ENCODE measurements at regions of chr6 and their contacts with region 1.

Region 1: DNA sequence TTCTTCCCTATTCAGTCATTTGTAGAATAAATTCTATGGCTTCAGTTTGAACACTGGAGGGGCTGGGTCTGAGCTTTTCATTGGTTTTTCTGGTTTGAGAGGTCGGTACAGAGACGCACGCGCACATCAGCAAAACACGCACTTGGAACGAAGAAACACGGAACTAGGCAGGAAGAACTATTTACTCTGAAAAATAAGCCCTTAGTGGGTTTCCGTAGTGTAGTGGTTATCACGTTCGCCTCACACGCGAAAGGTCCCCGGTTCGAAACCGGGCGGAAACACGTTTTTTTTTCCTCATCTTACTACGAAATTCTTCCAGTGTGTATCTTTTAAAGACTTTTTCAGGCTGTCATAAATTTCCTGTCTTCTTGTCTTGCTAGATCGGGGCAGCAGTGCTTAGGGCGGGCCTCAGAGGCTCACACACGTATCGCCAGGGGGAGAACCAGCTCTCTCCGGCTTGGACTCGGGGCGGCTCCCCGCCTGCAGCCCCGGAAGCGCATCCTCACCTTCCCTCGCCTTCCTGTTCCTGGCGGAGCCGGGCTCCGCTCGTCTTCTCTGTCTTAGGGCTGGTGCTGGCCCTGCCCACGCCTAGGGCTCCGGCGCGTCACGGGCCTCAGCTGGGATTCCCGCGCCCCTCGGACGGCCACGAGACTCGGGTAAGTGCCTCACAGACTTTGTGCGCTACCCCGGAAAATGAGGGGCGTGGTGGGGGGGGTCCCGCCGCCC is at the start of gene HMGN4:
- DNase-seq: peak; percentile 80
- H3K4me3 Mint-ChIP-seq: peak within 1 kb of the TSS; percentile 91
- H3K27ac Mint-ChIP-seq: peak within 1 kb of the TSS; percentile 96
- H3K4me1 Mint-ChIP-seq: peaks cover 60% of the 10 kb centered on the region
- H3K27me3 Mint-ChIP-seq: peaks cover 3% of the 10 kb centered on the region
- total RNA-seq, gene HMGN4: 77.6 and 86.8 TPM in 2 replicates

Region 2: GRCh38 chr6:26025894-26026832 is 511.8 kb before region 1 on chr6:
- intact Hi-C with region 1: loop called (anchors 10 kb)
- DNase-seq: peak; percentile 88
- H3K4me3 Mint-ChIP-seq: peak overlapping the region; percentile 85
- H3K27ac Mint-ChIP-seq: peak overlapping the region; percentile 96
- H3K4me1 Mint-ChIP-seq: peaks cover 93% of the 10 kb centered on the region
- H3K27me3 Mint-ChIP-seq: no peaks in the 10 kb centered on the region

Region 3: DNA sequence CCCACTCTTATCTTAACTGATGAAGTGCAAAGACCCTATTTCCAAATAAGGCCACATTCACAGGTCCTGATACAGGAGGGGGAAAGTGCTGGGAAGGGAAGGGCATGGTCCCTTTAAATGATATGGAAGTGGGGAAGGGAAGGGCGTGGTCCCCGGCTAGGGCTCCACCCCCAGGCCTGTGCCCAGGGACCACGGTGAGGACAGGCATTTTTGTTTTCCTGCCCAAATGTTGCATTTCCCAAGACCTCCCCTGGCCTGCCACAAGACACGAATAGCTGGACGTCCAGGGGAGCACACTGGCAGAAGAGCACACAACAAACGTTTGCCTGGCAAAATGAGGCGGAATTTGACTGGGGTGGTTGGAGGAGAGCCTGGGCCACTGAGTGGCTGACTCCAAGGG is 466.9 kb before region 1 on chr6:
- intact Hi-C with region 1: no loop called
- DNase-seq: no peak
- H3K4me3 Mint-ChIP-seq: no peak overlapping the region
- H3K27ac Mint-ChIP-seq: no peak overlapping the region
- H3K4me1 Mint-ChIP-seq: peaks cover under 1% of the 10 kb centered on the region
- H3K27me3 Mint-ChIP-seq: peaks cover 14% of the 10 kb centered on the region

Region 4: DNA sequence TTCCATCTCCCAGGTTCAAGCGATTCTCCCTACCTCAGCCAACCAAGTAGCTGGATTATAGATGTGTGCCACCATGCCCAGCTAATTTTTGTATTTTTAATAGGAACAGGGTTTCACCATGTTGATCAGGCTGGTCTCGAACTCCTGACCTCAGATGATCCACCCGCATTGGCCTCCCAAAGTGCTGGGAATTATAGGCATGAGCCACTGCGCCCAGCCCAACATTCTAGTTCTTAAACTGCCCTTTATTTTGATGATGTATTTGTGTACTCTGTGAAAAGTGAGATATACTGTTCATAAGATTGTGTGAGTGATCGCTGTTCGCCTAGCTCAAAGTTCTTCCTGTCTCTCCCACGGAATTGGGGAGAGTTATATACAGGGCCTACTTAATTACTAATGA is 357.7 kb before region 1 on chr6:
- intact Hi-C with region 1: no loop called
- DNase-seq: no peak
- H3K4me3 Mint-ChIP-seq: no peak overlapping the region
- H3K27ac Mint-ChIP-seq: peak overlapping the region; percentile 80
- H3K4me1 Mint-ChIP-seq: peaks cover 46% of the 10 kb centered on the region
- H3K27me3 Mint-ChIP-seq: no peaks in the 10 kb centered on the region

Region 5: DNA sequence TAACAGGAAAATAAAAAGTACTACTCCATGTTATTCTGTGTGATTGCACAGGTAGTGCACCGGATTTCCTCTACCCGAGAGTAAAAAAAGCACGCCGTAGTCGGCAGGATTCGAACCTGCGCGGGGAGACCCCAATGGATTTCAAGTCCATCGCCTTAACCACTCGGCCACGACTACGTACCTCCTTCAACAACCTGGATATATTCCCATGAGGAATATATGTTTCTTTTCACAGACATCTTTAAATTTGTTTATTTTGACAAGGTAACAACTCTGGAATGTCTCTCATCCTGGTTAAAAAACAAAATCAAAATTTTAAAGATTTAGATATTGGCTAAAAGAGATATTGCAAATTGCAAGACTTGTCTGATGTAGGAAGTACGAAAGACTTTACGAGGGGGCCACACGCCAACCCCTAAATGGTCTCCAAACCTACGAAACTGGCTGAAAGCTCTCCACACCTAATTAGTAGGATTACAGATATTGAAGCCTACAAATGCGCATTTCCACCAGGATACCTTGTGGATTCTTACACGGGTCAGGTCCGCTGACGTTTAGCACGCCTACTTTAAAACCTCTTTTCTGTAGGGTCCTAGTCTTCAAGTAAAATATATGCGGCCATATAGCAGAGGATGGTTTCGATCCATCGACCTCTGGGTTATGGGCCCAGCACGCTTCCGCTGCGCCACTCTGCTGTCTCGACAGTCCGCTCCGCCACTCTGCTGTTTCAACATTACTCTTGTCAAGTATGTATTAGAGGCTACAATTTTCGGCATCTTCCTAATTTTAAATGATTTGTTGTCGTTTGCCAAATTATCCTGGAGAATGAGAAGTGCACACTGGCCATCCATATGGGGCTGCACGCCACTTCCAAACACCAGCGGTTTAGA is 225.3 kb before region 1 on chr6:
- intact Hi-C with region 1: loop called (anchors 1 kb)
- DNase-seq: peak; percentile 72
- H3K4me3 Mint-ChIP-seq: peak overlapping the region; percentile 84
- H3K27ac Mint-ChIP-seq: peak overlapping the region; percentile 92
- H3K4me1 Mint-ChIP-seq: peaks cover 51% of the 10 kb centered on the region
- H3K27me3 Mint-ChIP-seq: no peaks in the 10 kb centered on the region

Region 6: GRCh38 chr6:26342106-26343004 is 195.7 kb before region 1 on chr6:
- intact Hi-C with region 1: loop called (anchors 1 kb)
- DNase-seq: no peak
- H3K4me3 Mint-ChIP-seq: peak overlapping the region; percentile 84
- H3K27ac Mint-ChIP-seq: peak overlapping the region; percentile 53
- H3K4me1 Mint-ChIP-seq: peaks cover 27% of the 10 kb centered on the region
- H3K27me3 Mint-ChIP-seq: peaks cover 7% of the 10 kb centered on the region

Region 7: DNA sequence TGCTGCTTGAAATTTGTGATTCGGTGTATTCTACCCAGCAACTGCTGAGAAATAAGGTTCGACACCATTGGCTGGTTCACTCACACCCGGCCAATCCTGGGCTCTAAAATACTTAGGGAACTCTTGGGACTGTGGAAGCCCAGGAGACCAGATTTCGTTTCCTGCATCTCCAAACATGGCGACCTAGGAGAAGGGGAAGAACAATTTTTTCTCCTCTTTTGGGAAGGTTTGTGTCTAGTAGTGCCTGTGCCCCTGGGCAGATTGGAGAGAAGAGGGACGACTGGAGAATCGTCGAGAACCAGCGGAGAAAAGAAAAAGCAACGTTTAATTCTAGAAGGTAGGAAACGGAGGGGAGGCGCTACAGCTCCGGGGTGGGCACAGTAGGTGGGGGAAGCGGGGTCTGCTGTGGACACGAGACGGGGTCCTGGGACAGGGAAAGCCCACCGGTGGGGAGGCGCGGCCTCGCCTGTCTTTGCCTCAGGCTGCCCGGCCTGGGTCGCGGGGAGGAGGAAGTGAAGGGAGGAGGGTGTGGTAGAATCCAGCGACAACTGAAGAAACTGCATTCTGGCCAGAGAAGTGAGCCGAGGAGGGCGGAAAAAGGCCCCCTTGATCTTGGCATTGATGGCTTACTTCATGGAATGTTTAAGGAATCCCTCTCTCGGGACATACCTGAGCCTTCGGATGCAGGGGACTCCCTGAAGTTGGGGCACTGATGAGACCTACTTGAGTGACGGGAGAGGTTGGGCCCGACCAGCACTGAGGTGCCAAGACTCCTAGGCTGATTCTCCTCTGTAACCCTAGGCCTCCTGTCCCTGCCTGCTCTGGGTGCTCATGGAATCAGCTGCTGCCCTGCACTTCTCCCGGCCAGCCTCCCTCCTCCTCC is 80.0 kb before region 1 on chr6 and contains the start of gene BTN2A1:
- intact Hi-C with region 1: loop called (anchors 1 kb)
- DNase-seq: peak; percentile 68
- H3K4me3 Mint-ChIP-seq: peak within 1 kb of the TSS; percentile 100
- H3K27ac Mint-ChIP-seq: peak within 1 kb of the TSS; percentile 96
- H3K4me1 Mint-ChIP-seq: peaks cover 57% of the 10 kb centered on the region
- H3K27me3 Mint-ChIP-seq: no peaks in the 10 kb centered on the region
- total RNA-seq, gene BTN2A1: 19.9 TPM in 2 replicates

Region 8: DNA sequence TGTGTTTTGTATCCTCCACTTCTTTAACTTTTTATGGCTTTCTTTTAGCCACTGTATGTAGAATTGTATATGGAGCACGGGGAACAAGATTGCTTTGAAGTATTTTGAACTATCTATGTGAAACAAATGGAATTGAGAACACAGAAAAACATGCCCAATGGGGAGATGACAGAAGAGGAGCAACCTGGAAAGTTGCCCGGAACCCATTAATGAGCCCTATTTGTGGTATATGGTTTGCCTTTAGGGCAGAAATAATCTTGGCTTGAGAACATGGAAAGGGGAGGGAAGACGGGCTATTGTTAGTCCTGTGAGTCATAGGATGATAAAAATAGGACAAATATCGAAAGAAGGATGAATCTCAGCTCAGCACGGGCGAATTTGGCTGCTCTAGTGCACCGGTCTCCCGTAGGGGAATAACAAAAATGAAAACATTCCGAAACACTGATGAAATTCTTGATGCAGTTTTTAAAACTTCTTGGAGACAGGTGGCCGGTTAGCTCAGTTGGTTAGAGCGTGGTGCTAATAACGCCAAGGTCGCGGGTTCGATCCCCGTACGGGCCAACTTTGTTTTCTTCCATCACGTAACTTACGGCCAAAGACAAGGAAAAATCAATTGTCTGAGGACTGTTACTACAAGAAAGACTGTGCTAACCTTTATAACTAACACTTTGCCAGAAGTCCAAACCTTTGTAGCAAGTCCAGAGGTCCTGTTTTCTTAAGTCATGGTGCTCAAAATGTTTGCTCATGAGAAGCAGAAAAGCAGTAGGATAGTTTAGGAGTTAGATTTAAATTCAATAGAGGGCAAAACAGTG is 15.8 kb after region 1 on chr6:
- intact Hi-C with region 1: loop called (anchors 1 kb)
- DNase-seq: peak; percentile 72
- H3K4me3 Mint-ChIP-seq: no peak overlapping the region
- H3K27ac Mint-ChIP-seq: no peak overlapping the region
- H3K4me1 Mint-ChIP-seq: peaks cover 18% of the 10 kb centered on the region
- H3K27me3 Mint-ChIP-seq: peaks cover 2% of the 10 kb centered on the region